H1 (cell line): ENCODE measurements at regions of chr9 and their contacts with region 1.

Region 1: GRCh38 chr9:132768932-132769905 is 99.0 kb downstream of the GTF3C4 start:
- DNase-seq: peak; percentile 34 to 72
- H3K4me3 ChIP-seq: peak overlapping the region; percentile 78 to 91 (median 82)
- H3K27ac ChIP-seq: no peak overlapping the region; the same call in 1 of the 2 replicates
- H3K4me1 ChIP-seq: peaks cover 0 to 9% (median 7%) of the 10 kb centered on the region in 4 experiments; a peak in 4 of 7 replicates
- H3K27me3 ChIP-seq: peaks cover 0 to 8% (median 3%) of the 10 kb centered on the region in 4 experiments; a peak in 2 of 7 replicates
- CTCF ChIP-seq: peak; percentile 45 to 51 (median 48)
- EP300 ChIP-seq: no peak
- POLR2A ChIP-seq: no peak
- RAD21 ChIP-seq: peak; percentile 26 to 55

Region 2: GRCh38 chr9:132507746-132508469 is 261.3 kb before region 1 on chr9:
- CTCF ChIA-PET with region 1: no interaction called
- POLR2A ChIA-PET with region 1: no interaction called
- DNase-seq: peak; percentile 43 to 87
- H3K4me3 ChIP-seq: no peak overlapping the region
- H3K27ac ChIP-seq: no peak overlapping the region
- H3K4me1 ChIP-seq: peaks cover 0 to 9% (median 6%) of the 10 kb centered on the region in 4 experiments; a peak in 4 of 7 replicates
- H3K27me3 ChIP-seq: no peaks in the 10 kb centered on the region
- CTCF ChIP-seq: peak; percentile 80 to 89 (median 87)
- EP300 ChIP-seq: no peak
- POLR2A ChIP-seq: no peak
- RAD21 ChIP-seq: peak; percentile 91 to 92

Region 3: DNA sequence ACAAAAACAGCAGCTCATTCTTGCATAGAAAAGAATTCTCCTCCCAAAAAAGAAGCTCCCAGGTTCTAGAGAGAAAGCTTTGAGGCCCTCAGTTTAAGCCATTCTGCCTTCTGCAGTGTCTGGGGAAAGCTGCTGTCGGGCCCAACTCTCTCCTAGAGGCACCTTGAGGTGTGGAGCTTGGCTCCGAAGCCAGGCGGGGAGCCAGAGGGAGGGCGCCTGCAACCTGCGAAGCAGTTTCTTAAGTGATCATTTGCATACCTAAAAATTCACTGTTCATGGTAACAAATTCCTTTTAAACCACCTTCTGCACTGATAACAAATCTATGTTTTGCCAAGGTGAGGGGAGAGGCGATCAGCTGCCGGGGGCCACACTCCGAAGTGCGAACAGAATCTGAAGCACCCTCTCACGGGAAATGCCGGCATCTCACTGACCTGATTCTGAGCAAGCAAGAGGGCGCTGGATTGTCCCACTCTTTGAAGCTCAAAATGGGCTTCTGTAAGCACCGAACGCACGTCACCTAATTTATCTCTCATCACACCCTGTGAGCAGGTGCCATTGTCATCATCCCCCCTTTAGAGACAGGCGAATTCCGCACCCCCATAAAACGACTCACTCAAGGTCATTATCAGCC is 12.9 kb before region 1 on chr9:
- CTCF ChIA-PET with region 1: interaction called, 33 read pairs
- POLR2A ChIA-PET with region 1: interaction called, 5 read pairs
- DNase-seq: no peak
- H3K4me3 ChIP-seq: no peak overlapping the region
- H3K27ac ChIP-seq: no peak overlapping the region
- H3K4me1 ChIP-seq: peaks cover 0 to 8% (median 3%) of the 10 kb centered on the region in 4 experiments; a peak in 4 of 7 replicates
- H3K27me3 ChIP-seq: no peaks in the 10 kb centered on the region; a peak in 1 of 7 replicates
- CTCF ChIP-seq: no peak
- EP300 ChIP-seq: no peak
- POLR2A ChIP-seq: no peak
- RAD21 ChIP-seq: no peak